Naive thymus-derived CD4-positive, alpha-beta T cell (primary cell): ENCODE measurements at regions of chrX and their contacts with region 1.

Region 1: DNA sequence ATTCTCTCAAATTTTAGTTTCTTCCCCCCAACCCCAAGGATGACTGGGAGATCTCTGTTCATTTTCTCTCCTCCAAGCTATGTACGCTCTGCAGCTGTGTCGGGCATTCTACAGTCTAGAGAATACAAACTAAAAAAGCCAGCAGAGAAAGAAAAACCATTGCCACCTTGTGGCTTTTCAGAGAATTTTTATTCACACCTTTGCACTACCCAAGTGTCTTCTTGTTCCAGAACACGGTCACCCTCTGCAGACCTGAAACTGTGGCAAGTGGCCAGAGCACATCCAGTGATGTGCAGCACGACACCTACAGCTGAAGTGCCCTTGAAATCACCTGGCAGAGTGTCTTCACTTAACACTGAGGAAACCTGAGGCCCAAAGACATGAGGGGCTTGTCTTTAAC is 68.6 kb downstream of the CHST7 start:
- DNase-seq: peak in 6 of 9 donors; percentile 3 to 54 (median 38)
- ATAC-seq: peak; percentile 65
- H3K4me3 ChIP-seq: no peak overlapping the region
- H3K4me3 Mint-ChIP-seq: no peak overlapping the region
- H3K27ac ChIP-seq: no peak overlapping the region
- H3K27ac Mint-ChIP-seq: no peak overlapping the region
- H3K4me1 ChIP-seq: no peaks in the 10 kb centered on the region
- H3K4me1 Mint-ChIP-seq: peaks cover 0 to 17% (median 0%) of the 10 kb centered on the region in 7 donors
- H3K27me3 ChIP-seq: no peaks in the 10 kb centered on the region
- H3K27me3 Mint-ChIP-seq: no peaks in the 10 kb centered on the region

Region 2: DNA sequence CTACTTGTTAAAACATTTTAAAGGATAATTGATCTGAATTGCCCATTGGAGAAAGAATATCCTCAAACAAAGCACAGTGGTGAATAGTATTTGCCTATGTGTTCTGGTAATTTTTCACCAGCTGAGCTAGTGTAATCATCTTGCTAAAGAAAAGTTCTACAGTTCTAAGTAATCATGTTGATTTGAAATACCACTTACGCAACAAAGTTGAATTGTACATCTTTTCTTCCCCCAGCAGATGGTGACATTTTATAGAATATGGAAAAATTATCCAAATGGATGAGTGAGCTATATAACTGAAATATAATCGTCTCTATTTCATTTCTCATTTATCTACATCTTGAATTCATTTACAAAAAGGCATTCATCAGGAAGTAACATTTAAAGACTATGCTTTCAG is 87.2 kb before region 1 on chrX:
- CTCF ChIA-PET with region 1: interaction called, 4 read pairs
- POLR2A ChIA-PET with region 1: no interaction called
- intact Hi-C with region 1: loop called (anchors 1 to 2 kb)
- DNase-seq: no peak
- ATAC-seq: no peak
- H3K4me3 ChIP-seq: no peak overlapping the region
- H3K4me3 Mint-ChIP-seq: no peak overlapping the region
- H3K27ac ChIP-seq: no peak overlapping the region
- H3K27ac Mint-ChIP-seq: no peak overlapping the region
- H3K4me1 ChIP-seq: no peaks in the 10 kb centered on the region
- H3K4me1 Mint-ChIP-seq: no peaks in the 10 kb centered on the region
- H3K27me3 ChIP-seq: no peaks in the 10 kb centered on the region
- H3K27me3 Mint-ChIP-seq: no peaks in the 10 kb centered on the region

Region 3: DNA sequence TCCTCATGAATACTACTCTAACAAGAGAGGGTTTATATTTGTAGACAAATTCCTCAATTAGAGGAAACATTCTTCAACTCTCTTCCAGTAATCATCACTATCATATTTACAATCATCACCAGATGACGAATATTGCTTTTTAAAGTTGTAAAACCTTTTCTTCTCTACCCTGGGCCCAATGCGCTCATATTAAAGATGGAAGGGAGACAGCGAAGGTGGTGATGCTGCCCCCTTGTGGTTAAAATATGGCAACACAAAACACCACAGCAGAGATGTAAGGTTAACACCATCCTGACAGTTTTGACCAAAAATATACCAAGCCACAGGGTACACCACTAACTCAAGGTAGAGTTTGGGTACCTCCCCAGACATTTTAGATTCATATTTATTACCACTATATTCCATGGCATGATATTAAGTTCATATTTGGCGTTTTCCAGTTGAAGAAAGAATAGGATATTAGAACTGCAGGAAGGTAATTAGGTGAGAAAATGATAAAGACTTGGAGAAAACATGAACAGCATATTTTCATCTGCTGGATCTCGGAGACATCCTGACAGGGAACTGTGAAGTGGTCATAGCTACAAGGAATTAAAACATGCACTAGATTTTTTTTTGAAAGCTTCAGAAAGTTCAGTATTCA is 44.0 kb after region 1 on chrX:
- CTCF ChIA-PET with region 1: no interaction called
- POLR2A ChIA-PET with region 1: no interaction called
- intact Hi-C with region 1: loop called in 1 of 2 experiments (anchors 5 kb)
- DNase-seq: peak in 6 of 9 donors; percentile 5 to 42 (median 28)
- ATAC-seq: peak; percentile 54
- H3K4me3 ChIP-seq: no peak overlapping the region
- H3K4me3 Mint-ChIP-seq: no peak overlapping the region
- H3K27ac ChIP-seq: no peak overlapping the region
- H3K27ac Mint-ChIP-seq: no peak overlapping the region
- H3K4me1 ChIP-seq: no peaks in the 10 kb centered on the region
- H3K4me1 Mint-ChIP-seq: peaks cover 0 to 15% (median 0%) of the 10 kb centered on the region in 7 donors
- H3K27me3 ChIP-seq: no peaks in the 10 kb centered on the region
- H3K27me3 Mint-ChIP-seq: no peaks in the 10 kb centered on the region

Region 4: DNA sequence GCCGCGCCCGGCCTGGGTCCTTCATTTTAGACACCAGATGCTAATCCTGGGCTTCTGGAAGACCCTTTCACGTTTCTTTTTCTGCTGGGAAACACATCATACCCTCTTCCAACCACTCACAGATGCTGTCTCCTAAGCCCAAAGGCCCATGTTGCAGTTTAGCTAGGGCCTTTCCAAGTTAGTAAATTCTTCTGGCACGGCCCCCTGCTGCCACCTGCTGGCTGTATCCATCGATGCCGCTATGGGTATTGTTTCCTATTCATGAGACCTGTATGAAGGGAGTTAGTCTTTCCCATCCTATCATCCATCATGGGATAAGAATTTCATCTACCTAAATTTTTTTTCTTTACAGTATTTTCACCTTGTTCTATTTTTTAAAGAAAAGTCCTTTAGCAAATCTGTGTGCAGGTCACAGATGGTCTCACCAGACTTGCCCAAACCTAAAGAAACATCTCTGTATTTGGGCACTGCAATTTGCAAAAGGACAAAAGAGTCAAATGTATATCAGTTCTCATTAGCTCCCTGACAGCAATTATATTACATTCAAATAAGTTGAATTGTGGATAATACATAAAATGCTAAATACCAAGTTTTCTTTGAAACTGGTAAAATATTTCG is 154.5 kb after region 1 on chrX:
- CTCF ChIA-PET with region 1: no interaction called
- POLR2A ChIA-PET with region 1: no interaction called
- intact Hi-C with region 1: loop called in 1 of 2 experiments (anchors 10 kb)
- DNase-seq: peak; percentile 25 to 67 (median 52)
- ATAC-seq: peak; percentile 76
- H3K4me3 ChIP-seq: no peak overlapping the region
- H3K4me3 Mint-ChIP-seq: no peak overlapping the region
- H3K27ac ChIP-seq: no peak overlapping the region
- H3K27ac Mint-ChIP-seq: no peak overlapping the region
- H3K4me1 ChIP-seq: no peaks in the 10 kb centered on the region
- H3K4me1 Mint-ChIP-seq: peaks cover 0 to 19% (median 6%) of the 10 kb centered on the region in 7 donors
- H3K27me3 ChIP-seq: no peaks in the 10 kb centered on the region
- H3K27me3 Mint-ChIP-seq: peaks cover 0 to 6% (median 0%) of the 10 kb centered on the region in 5 donors

Region 5: DNA sequence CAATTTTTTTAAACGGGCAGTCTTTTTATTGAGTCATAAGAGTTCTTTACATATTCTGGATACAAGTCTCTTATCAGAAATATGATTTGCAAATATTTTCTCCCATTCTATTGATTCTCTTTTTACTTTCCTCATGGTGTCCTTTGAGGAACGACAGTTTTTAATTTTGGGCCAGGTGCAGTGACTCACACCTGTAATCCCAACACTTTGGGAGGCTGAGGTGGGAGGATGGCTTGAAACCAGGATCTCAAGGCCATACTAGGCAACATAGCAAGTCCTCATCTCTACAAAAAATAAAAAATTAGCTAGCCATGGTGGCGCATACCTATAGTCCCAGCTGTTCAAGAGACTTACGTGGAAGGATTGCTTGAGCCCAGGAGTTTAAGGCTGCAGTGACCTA is 370.0 kb after region 1 on chrX:
- CTCF ChIA-PET with region 1: no interaction called
- POLR2A ChIA-PET with region 1: no interaction called
- intact Hi-C with region 1: no loop called
- DNase-seq: no peak
- ATAC-seq: no peak
- H3K4me3 ChIP-seq: no peak overlapping the region
- H3K4me3 Mint-ChIP-seq: no peak overlapping the region
- H3K27ac ChIP-seq: no peak overlapping the region
- H3K27ac Mint-ChIP-seq: no peak overlapping the region
- H3K4me1 ChIP-seq: no peaks in the 10 kb centered on the region
- H3K4me1 Mint-ChIP-seq: no peaks in the 10 kb centered on the region
- H3K27me3 ChIP-seq: no peaks in the 10 kb centered on the region
- H3K27me3 Mint-ChIP-seq: peaks cover 0 to 5% (median 0%) of the 10 kb centered on the region in 5 donors